Pancreas (tissue), 10 donors: ENCODE measurements at regions of chr22 and their contacts with region 1.

Region 1: GRCh38 chr22:50282361-50282760 is 12.2 kb upstream of the MAPK11 start:
- DNase-seq: peak in 4 of 6 donors; percentile 77 to 80 (median 78)
- ATAC-seq: peak; percentile 72 to 89 (median 86)
- H3K4me3 ChIP-seq: no peak overlapping the region
- H3K27ac ChIP-seq: peak overlapping the region; percentile 60 to 76 (median 73)
- H3K4me1 ChIP-seq: peaks cover 0 to 5% (median 0%) of the 10 kb centered on the region in 3 donors
- H3K27me3 ChIP-seq: no peaks in the 10 kb centered on the region
- CTCF ChIP-seq: peak in 1 of 4 donors; percentile 2

Region 2: GRCh38 chr22:50320671-50321325 is 38.4 kb after region 1 on chr22:
- intact Hi-C with region 1: loop called in 2 of 3 experiments (anchors 5 to 10 kb)
- DNase-seq: peak in 1 of 6 donors; percentile 23
- ATAC-seq: no peak
- H3K4me3 ChIP-seq: no peak overlapping the region
- H3K27ac ChIP-seq: no peak overlapping the region
- H3K4me1 ChIP-seq: no peaks in the 10 kb centered on the region
- H3K27me3 ChIP-seq: no peaks in the 10 kb centered on the region
- CTCF ChIP-seq: no peak